ENCODE measurements at regions of chr11 and their contacts with region 1.

Region 1: GRCh38 chr11:38791302-38791961 is 2193.4 kb upstream of the RAG2 start:
- DNase-seq: peak in 1 of 5 donors; percentile 12
- ATAC-seq: peak in 1 of 4 donors; percentile 58
- H3K4me3 ChIP-seq: no peak overlapping the region
- H3K27ac ChIP-seq: no peak overlapping the region
- H3K4me1 ChIP-seq: no peaks in the 10 kb centered on the region
- H3K27me3 ChIP-seq: no peaks in the 10 kb centered on the region
- CTCF ChIP-seq: peak; percentile 58 to 86 (median 70)
- POLR2A ChIP-seq: no peak

Region 2: DNA sequence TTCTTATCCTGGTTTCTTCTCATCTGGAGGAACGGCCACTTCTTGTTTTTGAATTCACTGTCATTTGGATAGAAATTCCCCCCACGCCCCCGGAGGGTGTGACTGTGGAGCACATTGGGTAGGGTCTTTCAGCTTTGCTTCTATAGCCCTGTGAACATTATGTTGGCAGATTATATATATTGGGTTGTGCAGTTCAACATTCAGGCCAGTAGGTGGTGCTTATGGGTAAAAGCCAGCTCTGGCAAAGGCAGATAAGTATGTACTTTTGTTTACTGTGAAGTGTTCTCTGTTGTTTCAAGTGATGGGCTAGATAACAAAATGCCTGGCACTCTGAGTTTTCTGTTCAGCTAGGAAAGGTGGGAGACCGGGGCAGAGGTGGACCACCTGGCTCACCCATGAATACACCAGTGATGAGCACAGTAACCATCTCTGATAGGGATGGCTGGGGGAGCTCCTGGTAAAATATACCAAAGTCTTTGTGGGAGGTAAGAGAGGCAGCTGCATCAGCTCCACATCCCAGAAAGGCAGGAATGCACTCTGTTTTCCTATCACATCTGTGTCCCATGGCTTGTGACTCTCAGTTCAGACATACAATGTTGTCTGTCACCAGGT is 845.2 kb before region 1 on chr11:
- intact Hi-C with region 1: loop called in 6 of 10 experiments (anchors 5 to 10 kb)
- DNase-seq: no peak
- ATAC-seq: peak in 2 of 4 donors; percentile 15 to 26
- H3K4me3 ChIP-seq: no peak overlapping the region
- H3K27ac ChIP-seq: no peak overlapping the region
- H3K4me1 ChIP-seq: no peaks in the 10 kb centered on the region
- H3K27me3 ChIP-seq: no peaks in the 10 kb centered on the region
- CTCF ChIP-seq: peak; percentile 28 to 63 (median 47)
- POLR2A ChIP-seq: no peak

Region 3: DNA sequence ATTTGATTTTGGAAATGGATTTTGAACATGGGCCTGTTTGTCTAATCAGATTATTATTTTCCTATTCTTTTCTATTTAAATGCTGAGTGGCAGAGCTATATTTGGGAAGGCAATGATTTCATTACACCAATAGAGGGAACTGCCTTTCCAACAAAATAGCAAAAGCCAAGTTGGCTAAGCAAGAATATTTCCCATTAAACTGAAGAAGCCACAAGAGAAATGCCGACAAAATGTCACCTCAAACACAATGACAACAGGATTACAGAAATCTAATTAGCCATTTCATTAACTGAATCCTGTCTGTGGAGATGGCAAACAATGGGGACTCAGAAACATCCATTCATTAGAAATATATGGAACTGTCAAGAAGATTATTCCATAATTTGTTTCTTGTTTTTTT is 600.3 kb before region 1 on chr11:
- intact Hi-C with region 1: loop called in 1 of 10 experiments (anchors 10 kb)
- DNase-seq: no peak
- ATAC-seq: no peak
- H3K4me3 ChIP-seq: no peak overlapping the region
- H3K27ac ChIP-seq: no peak overlapping the region
- H3K4me1 ChIP-seq: no peaks in the 10 kb centered on the region
- H3K27me3 ChIP-seq: no peaks in the 10 kb centered on the region
- CTCF ChIP-seq: peak in 1 of 12 donors; percentile 16
- POLR2A ChIP-seq: no peak

Region 4: DNA sequence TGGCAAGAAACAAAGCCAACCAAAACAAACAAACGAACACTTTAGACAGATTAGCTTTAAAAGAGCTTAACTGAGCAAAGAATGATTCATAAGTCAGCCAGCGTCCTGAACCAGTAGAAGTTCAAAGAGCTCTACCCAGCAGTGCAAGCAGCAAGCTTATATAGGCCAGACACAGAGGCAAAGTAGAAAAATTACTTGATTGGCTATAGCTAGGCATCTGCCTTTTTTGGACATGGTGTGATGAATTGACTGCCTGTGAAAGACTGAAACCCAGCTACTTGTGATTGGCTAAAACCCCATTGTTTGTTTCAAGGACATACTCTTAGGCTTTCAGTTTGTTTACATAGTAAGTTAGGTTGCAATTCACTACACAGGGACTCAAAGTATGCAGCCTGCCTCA is 73.4 kb before region 1 on chr11:
- intact Hi-C with region 1: no loop called
- DNase-seq: no peak
- ATAC-seq: no peak
- H3K4me3 ChIP-seq: no peak overlapping the region
- H3K27ac ChIP-seq: no peak overlapping the region
- H3K4me1 ChIP-seq: no peaks in the 10 kb centered on the region
- H3K27me3 ChIP-seq: no peaks in the 10 kb centered on the region
- CTCF ChIP-seq: no peak
- POLR2A ChIP-seq: no peak

Region 5: DNA sequence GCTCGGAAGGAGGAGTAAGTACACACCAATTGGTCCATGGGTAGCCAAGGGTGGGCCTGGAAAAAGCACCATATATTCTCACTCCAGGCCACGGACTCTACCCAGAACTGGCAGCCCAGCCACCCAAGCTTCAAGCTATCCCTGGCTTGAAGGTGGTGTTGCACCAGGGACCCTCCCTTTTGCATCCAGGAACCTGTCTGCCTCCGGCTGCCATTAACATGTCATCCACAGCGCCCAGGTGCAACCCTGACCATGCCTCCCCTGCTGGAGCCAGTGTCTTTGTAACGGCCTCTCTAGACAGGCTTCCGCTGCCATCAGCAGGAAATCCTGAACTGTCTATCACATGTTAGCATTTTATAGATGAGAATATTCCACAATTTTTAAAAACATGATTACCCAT is 34.9 kb before region 1 on chr11:
- intact Hi-C with region 1: no loop called
- DNase-seq: no peak
- ATAC-seq: no peak
- H3K4me3 ChIP-seq: no peak overlapping the region
- H3K27ac ChIP-seq: no peak overlapping the region
- H3K4me1 ChIP-seq: no peaks in the 10 kb centered on the region
- H3K27me3 ChIP-seq: no peaks in the 10 kb centered on the region
- CTCF ChIP-seq: no peak
- POLR2A ChIP-seq: no peak

Measured in heart left ventricle (tissue), 16 donors.